ENCODE measurements at regions of chr13 and their contacts with region 1.

Region 1: DNA sequence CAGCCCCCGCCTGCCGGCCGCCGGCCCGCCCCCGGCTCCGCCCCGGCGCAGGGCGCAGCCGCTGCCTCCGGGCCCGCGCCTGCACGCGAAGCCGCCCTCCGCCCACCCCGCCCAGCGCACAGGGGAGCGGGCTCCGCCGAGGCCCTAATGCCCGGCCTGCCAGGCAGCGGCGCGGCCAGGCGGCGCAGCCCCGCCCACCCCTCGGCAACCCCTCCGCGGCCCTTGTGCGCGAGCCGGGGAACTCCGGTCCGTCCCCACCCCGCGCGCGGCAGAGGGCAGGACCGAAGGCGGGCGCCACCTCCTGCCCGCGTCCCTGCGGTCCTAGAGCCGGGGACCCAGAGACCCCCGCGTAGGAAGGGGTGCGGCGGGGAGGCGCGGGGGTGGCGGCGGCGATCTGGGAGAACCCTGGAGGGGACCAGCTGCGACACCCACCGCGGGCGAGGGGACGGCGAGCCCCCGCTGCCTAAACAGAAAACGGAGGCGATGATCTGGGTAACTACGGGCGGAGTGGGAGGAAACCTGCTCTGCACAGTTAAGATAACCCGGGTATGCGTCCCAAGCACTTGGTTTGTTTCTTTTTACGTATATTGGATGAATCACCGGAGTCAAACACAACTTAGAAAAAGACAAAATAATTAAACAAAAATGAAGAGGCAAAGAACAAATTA is 350 bp upstream of the USP12 start:
- DNase-seq: peak; percentile 89 to 96
- H3K4me3 ChIP-seq: peak overlapping the region; percentile 67 to 72
- H3K27ac ChIP-seq: peak overlapping the region; percentile 86 to 90
- H3K4me1 ChIP-seq: peaks cover 0 to 33% (median 23%) of the 10 kb centered on the region in 4 donors
- H3K27me3 ChIP-seq: no peaks in the 10 kb centered on the region
- CTCF ChIP-seq: no peak

Region 2: GRCh38 chr13:26985285-26985878 is 186.6 kb before region 1 on chr13:
- intact Hi-C with region 1: loop called (anchors 10 kb)
- DNase-seq: peak; percentile 76 to 79
- H3K4me3 ChIP-seq: no peak overlapping the region
- H3K27ac ChIP-seq: peak overlapping the region in 1 of 2 donors; percentile 75
- H3K4me1 ChIP-seq: peaks cover 0 to 31% (median 9%) of the 10 kb centered on the region in 4 donors
- H3K27me3 ChIP-seq: peaks cover 0 to 2% of the 10 kb centered on the region in 2 donors
- CTCF ChIP-seq: peak; percentile 72 to 91

Region 3: GRCh38 chr13:27022571-27023311 is 149.2 kb before region 1 on chr13:
- intact Hi-C with region 1: no loop called
- DNase-seq: no peak
- H3K4me3 ChIP-seq: no peak overlapping the region
- H3K27ac ChIP-seq: no peak overlapping the region
- H3K4me1 ChIP-seq: no peaks in the 10 kb centered on the region
- H3K27me3 ChIP-seq: peaks cover 0 to 4% of the 10 kb centered on the region in 2 donors
- CTCF ChIP-seq: no peak

Region 4: DNA sequence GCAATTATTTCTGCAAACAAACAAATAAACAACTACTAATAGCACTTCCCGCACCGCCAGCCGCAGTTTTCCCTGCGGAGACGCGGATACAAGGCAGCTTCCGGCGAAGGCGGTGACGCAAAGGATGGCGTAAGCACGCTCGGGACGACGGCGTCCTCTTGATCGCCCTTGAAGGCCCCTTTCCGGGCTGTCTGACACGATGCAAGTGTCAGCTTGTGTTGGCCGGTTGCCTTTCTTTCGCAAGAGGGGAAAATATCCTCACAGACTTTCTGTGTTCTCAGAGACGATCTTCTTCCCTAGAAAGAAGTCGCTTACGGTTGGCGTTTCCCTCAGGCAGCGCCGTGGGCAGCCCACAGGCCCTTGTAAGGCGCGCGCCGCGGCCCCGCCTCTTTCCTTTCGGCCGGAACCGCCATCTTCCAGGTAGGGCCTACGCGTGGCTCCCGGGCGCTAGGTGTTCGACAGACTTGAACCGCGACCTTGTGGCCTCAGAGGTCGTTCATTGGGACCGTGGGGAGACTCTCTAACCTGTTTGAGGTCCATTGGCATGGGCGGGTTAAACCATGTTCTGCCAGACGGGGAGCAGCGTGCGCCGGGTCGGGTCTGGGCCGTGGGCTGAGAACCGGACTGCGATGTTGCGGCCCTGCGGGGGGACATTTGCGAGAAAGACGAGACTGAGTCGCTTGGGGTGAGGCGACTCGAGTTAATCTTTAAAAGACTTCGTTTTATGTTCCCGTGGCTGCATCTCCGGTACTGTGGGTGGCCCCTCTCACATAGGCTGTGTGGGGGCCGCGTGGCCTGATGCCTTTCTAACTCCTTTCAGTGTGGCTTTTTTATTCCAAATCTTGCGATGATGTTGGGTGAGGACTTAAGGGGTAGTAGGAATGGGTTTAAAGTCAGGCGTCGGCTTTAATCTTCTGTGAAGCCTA is 79.5 kb after region 1 on chr13 and contains the start of gene RPL21:
- intact Hi-C with region 1: loop called (anchors 5 kb)
- DNase-seq: peak; percentile 95 to 98
- H3K4me3 ChIP-seq: peak within 1 kb of the TSS; percentile 73 to 93
- H3K27ac ChIP-seq: peak within 1 kb of the TSS; percentile 94 to 95
- H3K4me1 ChIP-seq: peaks cover 0 to 40% (median 29%) of the 10 kb centered on the region in 4 donors
- H3K27me3 ChIP-seq: no peaks in the 10 kb centered on the region
- CTCF ChIP-seq: no peak

Region 5: DNA sequence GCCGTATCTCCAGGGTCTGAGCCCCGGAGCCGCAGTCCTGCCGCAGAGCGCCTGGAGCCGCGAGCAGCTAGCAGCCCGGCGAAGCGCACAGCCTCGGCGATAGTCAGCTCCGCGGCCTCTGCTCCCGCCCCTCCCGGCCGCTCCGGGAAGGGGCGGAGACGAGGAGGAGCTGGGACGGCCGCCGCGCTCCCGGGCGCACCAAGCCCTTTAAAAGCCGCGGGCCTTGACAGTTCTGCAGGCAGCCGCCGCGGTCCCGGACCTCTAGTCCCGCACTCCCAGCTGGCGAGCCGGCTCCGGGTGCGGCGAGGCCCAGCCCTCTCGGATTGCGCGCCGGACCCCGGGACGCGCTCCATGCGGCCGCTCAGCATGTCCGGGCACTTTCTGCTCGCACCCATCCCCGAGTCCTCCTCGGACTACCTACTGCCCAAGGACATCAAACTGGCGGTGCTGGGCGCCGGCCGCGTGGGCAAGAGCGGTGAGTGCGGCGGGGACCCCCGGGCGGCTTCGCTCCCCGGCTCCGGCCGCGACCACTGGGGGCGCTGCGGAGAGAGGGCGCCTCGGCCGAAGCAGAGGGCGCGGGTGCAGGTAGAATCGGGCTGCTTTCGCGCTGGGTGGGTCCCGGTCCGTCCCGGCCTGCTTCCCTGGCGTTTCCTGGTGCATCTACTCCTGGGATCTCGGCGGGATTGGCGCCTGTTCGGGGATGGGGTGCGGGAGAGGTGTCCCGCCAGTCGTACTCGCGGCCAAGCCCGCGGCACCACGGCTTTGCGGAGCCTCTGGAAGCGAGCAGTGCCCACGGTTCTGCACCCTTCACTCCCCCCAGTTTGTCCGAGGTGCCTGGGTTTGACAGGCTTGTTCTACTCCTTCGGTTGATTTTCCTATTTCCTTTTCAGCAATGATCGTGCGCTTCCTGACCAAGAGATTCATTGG is 98.9 kb after region 1 on chr13 and contains the start of gene RASL11A:
- intact Hi-C with region 1: loop called (anchors 5 kb)
- DNase-seq: peak; percentile 86 to 93
- H3K4me3 ChIP-seq: peak within 1 kb of the TSS; percentile 70 to 87
- H3K27ac ChIP-seq: peak within 1 kb of the TSS; percentile 83 to 93
- H3K4me1 ChIP-seq: peaks cover 4 to 35% (median 24%) of the 10 kb centered on the region in 4 donors
- H3K27me3 ChIP-seq: no peaks in the 10 kb centered on the region
- CTCF ChIP-seq: peak; percentile 94 to 95

Region 6: DNA sequence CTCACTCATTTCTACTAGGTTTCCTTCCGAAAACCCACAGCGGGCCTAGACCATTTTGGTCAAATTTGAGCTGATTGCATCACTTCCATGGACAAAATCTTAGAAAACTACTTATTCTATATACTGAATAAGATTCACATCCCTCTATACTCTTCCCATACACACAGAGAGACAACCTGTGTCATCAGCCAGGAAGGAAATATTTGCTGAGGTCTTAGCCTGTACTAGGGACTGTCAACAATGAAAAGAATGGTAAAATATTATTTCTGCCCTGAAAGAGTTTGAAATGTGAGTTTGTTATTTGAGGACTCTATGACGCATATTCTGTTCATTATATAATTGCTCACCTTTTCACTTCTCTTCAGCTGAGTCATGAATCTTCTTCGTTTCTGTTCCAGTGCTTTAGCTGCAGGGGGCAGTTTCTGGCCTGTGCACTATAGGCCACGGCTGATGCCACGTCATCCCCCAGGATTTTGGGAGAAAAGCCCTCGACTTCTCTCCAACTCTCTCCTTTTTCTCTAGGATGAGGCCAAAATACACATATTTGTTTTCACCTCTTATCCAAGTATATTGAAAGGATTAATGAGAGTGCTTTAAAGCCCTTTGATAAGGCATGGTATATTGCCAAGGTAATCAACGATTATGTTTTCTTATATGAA is 668.0 kb after region 1 on chr13:
- intact Hi-C with region 1: no loop called
- DNase-seq: no peak
- H3K4me3 ChIP-seq: no peak overlapping the region
- H3K27ac ChIP-seq: no peak overlapping the region
- H3K4me1 ChIP-seq: no peaks in the 10 kb centered on the region
- H3K27me3 ChIP-seq: peaks cover 0 to 21% of the 10 kb centered on the region in 2 donors
- CTCF ChIP-seq: no peak